H1 (cell line): ENCODE measurements at regions of chr19 and their contacts with region 1.

Region 1: GRCh38 chr19:50794439-50795237 is 4.4 kb downstream of the ACP4 start:
- DNase-seq: peak in 1 of 2 experiments; percentile 79
- H3K4me3 ChIP-seq: no peak overlapping the region
- H3K27ac ChIP-seq: peak overlapping the region; percentile 56
- H3K4me1 ChIP-seq: peaks cover 0 to 14% (median 6%) of the 10 kb centered on the region in 4 experiments; a peak in 5 of 7 replicates
- H3K27me3 ChIP-seq: no peaks in the 10 kb centered on the region; a peak in 1 of 7 replicates
- CTCF ChIP-seq: peak; percentile 47 to 72 (median 55)
- EP300 ChIP-seq: no peak
- POLR2A ChIP-seq: peak; percentile 64 to 80
- RAD21 ChIP-seq: no peak; a peak in 1 of 4 replicates

Region 2: GRCh38 chr19:50724522-50725217 is 70.0 kb before region 1 on chr19:
- CTCF ChIA-PET with region 1: interaction called, 3 read pairs
- POLR2A ChIA-PET with region 1: interaction called, 72 read pairs
- DNase-seq: peak; percentile 99
- H3K4me3 ChIP-seq: peak overlapping the region; percentile 68 to 82 (median 74)
- H3K27ac ChIP-seq: peak overlapping the region; percentile 20; the same call in 1 of the 2 replicates
- H3K4me1 ChIP-seq: peaks cover 3 to 39% (median 26%) of the 10 kb centered on the region in 4 experiments
- H3K27me3 ChIP-seq: peaks cover 4 to 39% (median 26%) of the 10 kb centered on the region in 4 experiments
- CTCF ChIP-seq: peak; percentile 63 to 80 (median 75)
- EP300 ChIP-seq: no peak
- POLR2A ChIP-seq: peak in 1 of 2 experiments; percentile 93; a peak in 2 of 3 replicates
- RAD21 ChIP-seq: peak; percentile 47 to 61

Region 3: GRCh38 chr19:50804420-50805272 is 10.0 kb after region 1 on chr19:
- CTCF ChIA-PET with region 1: interaction called, 5 read pairs
- POLR2A ChIA-PET with region 1: interaction called, 221 read pairs
- DNase-seq: peak; percentile 96 to 98
- H3K4me3 ChIP-seq: peak overlapping the region; percentile 88 to 99 (median 97)
- H3K27ac ChIP-seq: peak overlapping the region; percentile 100
- H3K4me1 ChIP-seq: peaks cover 0 to 11% (median 5%) of the 10 kb centered on the region in 4 experiments; a peak in 5 of 7 replicates
- H3K27me3 ChIP-seq: peaks cover 0 to 4% (median 3%) of the 10 kb centered on the region in 4 experiments; a peak in 3 of 7 replicates
- CTCF ChIP-seq: no peak
- EP300 ChIP-seq: no peak; a peak in 1 of 3 replicates
- POLR2A ChIP-seq: peak; percentile 98 to 99
- RAD21 ChIP-seq: peak in 1 of 2 experiments; percentile 0; a peak in 1 of 4 replicates

Region 4: GRCh38 chr19:50854636-50855410 is 60.2 kb after region 1 on chr19 and contains the start of gene KLK3:
- CTCF ChIA-PET with region 1: interaction called, 3 read pairs
- POLR2A ChIA-PET with region 1: interaction called, 12 read pairs
- DNase-seq: no peak
- H3K4me3 ChIP-seq: no peak within 1 kb of the TSS
- H3K27ac ChIP-seq: no peak within 1 kb of the TSS
- H3K4me1 ChIP-seq: peaks cover 0 to 14% (median 6%) of the 10 kb centered on the region in 4 experiments; a peak in 5 of 7 replicates
- H3K27me3 ChIP-seq: 0 out of 7 replicates have a peak, but pooled peaks cover 0 to 3% (median 0%) of the 10 kb centered on the region in 4 experiments
- CTCF ChIP-seq: no peak
- EP300 ChIP-seq: no peak
- POLR2A ChIP-seq: no peak
- RAD21 ChIP-seq: no peak
- total RNA-seq, gene KLK3: not detected in 2 replicates

Region 5: DNA sequence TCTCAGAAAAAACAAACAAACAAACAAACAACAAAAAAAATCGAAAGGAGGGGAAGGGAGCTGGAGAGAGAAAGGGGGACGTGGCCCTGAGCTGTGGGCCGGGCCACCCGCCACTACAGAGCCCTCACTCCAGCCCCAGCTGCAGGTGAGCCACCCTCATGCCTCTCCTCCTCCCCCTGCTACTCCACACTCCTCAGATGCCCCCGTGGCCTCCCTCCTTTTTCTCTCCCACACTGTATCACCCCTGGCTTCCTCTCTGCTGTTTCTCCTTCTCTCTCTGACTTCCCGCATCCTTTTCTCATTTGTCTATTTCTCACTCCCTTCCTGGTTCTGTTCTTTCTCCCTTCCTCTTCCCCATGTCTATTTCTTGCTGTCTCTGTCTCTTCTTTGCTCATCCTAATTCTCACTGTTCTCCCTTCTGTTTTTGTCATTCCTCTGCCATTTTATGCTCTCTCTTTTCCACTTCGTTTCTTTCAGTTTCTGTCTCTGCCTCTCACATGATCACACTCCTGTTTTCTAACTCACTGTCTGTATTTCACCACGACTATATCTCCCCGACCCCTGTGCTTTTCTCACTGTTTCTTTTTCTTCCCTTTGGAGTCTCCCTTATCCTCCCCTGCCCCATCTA is 81.3 kb after region 1 on chr19:
- CTCF ChIA-PET with region 1: interaction called, 12 read pairs
- POLR2A ChIA-PET with region 1: interaction called, 16 read pairs
- DNase-seq: no peak
- H3K4me3 ChIP-seq: no peak overlapping the region
- H3K27ac ChIP-seq: no peak overlapping the region
- H3K4me1 ChIP-seq: peaks cover 0 to 12% (median 3%) of the 10 kb centered on the region in 4 experiments; a peak in 3 of 7 replicates
- H3K27me3 ChIP-seq: peaks cover 0 to 3% (median 1%) of the 10 kb centered on the region in 4 experiments; a peak in 3 of 7 replicates
- CTCF ChIP-seq: no peak
- EP300 ChIP-seq: no peak
- POLR2A ChIP-seq: no peak
- RAD21 ChIP-seq: no peak

Region 6: DNA sequence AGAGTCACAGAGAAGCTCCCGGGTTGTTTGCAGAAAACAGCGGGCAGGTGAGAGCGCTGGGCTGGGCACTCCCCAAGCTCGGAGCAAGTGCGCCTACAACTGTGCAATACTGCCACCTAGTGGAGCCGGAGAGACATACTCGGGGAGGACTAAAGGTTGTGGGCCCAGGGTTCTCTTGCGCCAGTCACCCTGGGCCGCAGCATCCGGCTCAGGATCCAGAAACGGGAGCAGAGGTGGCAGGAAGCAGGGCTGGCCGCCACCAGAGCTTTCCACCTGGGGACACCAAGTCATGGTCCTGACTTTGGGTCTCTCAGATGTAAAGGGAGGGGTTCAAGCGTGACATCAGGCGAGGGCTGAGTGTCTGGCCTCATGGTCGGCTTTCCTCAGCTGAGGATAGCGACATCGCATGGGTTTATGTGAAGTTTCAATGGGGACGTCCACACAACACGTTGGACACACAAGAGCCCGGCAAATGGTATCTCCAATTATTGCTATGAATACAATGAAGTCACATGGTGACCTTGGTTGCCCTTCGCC is 127.7 kb after region 1 on chr19:
- CTCF ChIA-PET with region 1: interaction called, 12 read pairs
- POLR2A ChIA-PET with region 1: interaction called, 35 read pairs
- DNase-seq: peak; percentile 59 to 87
- H3K4me3 ChIP-seq: 0 out of 8 replicates have a peak overlapping the region, but pooled peaks of 1 of the 4 experiments have one; percentile 0
- H3K27ac ChIP-seq: no peak overlapping the region
- H3K4me1 ChIP-seq: peaks cover 0 to 7% (median 5%) of the 10 kb centered on the region in 4 experiments; a peak in 5 of 7 replicates
- H3K27me3 ChIP-seq: 0 out of 7 replicates have a peak, but pooled peaks cover 0 to 2% (median 0%) of the 10 kb centered on the region in 4 experiments
- CTCF ChIP-seq: peak; percentile 83 to 98 (median 90)
- EP300 ChIP-seq: no peak
- POLR2A ChIP-seq: no peak
- RAD21 ChIP-seq: peak; percentile 96 to 98